Panc1 (cell line): ENCODE measurements at regions of chr2 and their contacts with region 1.

Region 1: DNA sequence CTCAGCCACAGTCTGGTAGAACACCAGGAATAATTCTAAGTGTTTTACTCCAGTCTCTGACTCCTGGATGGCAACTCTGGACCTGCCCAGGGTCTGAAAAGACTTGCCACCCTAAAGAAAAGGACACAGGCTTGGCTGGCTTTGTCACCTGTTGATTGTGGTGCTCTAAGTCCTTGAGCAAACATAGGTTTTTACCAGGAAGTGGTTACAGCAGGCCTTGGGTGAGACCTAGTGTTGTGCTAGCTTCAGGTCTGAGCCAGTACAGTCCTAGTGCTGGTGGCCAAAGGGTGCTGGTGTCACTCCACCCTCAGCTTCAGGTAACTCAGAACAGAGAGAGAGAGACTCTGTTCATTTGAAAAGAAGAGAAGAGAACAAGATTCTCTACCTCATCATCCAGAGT is 1239.4 kb upstream of the CRIM1 start:
- DNase-seq: no peak
- ATAC-seq: no peak
- H3K4me3 ChIP-seq: no peak overlapping the region
- H3K27ac ChIP-seq: no peak overlapping the region
- H3K4me1 ChIP-seq: no peaks in the 10 kb centered on the region
- H3K27me3 ChIP-seq: no peaks in the 10 kb centered on the region
- CTCF ChIP-seq: no peak

Region 2: GRCh38 chr2:34912084-34912483 is 204.1 kb before region 1 on chr2:
- CTCF ChIA-PET with region 1: no interaction called
- POLR2A ChIA-PET with region 1: no interaction called
- in situ Hi-C with region 1: no loop called
- intact Hi-C with region 1: no loop called
- DNase-seq: no peak
- ATAC-seq: no peak
- H3K4me3 ChIP-seq: no peak overlapping the region
- H3K27ac ChIP-seq: no peak overlapping the region
- H3K4me1 ChIP-seq: no peaks in the 10 kb centered on the region
- H3K27me3 ChIP-seq: no peaks in the 10 kb centered on the region
- CTCF ChIP-seq: no peak

Region 3: DNA sequence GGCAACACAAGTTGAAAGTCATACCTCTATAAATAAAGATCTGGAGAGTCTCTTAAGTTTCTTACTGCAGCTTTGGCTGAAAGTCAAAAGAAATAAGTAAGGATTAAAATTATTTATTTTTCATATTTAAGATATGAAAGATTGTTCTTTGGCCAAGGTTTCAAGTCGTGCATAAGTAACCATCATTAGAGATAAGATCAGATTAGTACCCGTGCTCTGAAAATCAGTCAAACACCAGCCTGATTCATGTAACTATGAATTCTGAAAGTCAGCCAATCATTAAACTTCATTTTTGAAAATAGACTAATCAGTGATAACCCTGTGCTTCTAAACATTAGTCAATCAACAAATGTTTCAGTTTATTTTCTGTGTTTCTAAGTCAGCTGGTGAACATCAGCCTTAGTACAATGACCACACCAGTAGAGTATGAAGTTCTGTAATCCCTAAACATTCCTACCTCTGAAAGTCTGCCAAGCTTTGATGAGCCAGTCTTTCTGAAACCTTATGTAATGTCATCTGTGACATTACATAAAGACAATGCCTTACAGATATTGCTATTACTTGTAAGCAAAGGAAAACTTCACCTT is 431.9 kb after region 1 on chr2:
- CTCF ChIA-PET with region 1: no interaction called
- POLR2A ChIA-PET with region 1: interaction called, 10 read pairs
- in situ Hi-C with region 1: no loop called
- intact Hi-C with region 1: no loop called
- DNase-seq: no peak
- ATAC-seq: no peak
- H3K4me3 ChIP-seq: no peak overlapping the region
- H3K27ac ChIP-seq: no peak overlapping the region
- H3K4me1 ChIP-seq: no peaks in the 10 kb centered on the region
- H3K27me3 ChIP-seq: no peaks in the 10 kb centered on the region
- CTCF ChIP-seq: no peak

Region 4: DNA sequence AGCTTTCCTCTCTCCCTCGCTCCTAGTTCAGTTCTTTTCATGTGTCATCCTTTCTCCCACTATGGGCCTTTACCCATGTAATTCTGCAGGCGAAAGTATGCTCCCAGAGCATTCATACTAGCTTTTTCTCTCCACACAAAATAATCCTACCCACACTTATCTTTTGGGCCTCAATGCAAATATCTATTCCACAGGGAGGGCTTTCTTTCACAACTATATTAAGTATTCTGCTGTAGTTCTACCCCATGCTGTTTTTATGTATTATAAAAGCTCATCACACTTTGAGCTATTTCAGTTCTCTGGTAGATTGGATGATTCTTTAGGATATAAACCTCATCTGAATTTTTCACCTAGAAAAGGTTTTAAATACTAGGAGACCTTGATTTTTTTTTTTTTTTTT is 464.8 kb after region 1 on chr2:
- CTCF ChIA-PET with region 1: no interaction called
- POLR2A ChIA-PET with region 1: no interaction called
- in situ Hi-C with region 1: no loop called
- intact Hi-C with region 1: no loop called
- DNase-seq: no peak
- ATAC-seq: no peak
- H3K4me3 ChIP-seq: no peak overlapping the region
- H3K27ac ChIP-seq: no peak overlapping the region
- H3K4me1 ChIP-seq: no peaks in the 10 kb centered on the region
- H3K27me3 ChIP-seq: no peaks in the 10 kb centered on the region
- CTCF ChIP-seq: no peak